ENCODE measurements at regions of chr4 and their contacts with region 1.

Region 1: GRCh38 chr4:7802093-7802726 is 137.5 kb downstream of the AFAP1 start:
- DNase-seq: peak; percentile 68
- H3K4me3 Mint-ChIP-seq: no peak overlapping the region
- H3K27ac Mint-ChIP-seq: no peak overlapping the region
- H3K4me1 Mint-ChIP-seq: peaks cover 7% of the 10 kb centered on the region
- H3K27me3 Mint-ChIP-seq: no peaks in the 10 kb centered on the region

Region 2: GRCh38 chr4:7719354-7720174 is 82.6 kb before region 1 on chr4:
- intact Hi-C with region 1: loop called (anchors 2 kb)
- DNase-seq: peak; percentile 28
- H3K4me3 Mint-ChIP-seq: no peak overlapping the region
- H3K27ac Mint-ChIP-seq: no peak overlapping the region
- H3K4me1 Mint-ChIP-seq: no peaks in the 10 kb centered on the region
- H3K27me3 Mint-ChIP-seq: peaks cover 1% of the 10 kb centered on the region

Region 3: DNA sequence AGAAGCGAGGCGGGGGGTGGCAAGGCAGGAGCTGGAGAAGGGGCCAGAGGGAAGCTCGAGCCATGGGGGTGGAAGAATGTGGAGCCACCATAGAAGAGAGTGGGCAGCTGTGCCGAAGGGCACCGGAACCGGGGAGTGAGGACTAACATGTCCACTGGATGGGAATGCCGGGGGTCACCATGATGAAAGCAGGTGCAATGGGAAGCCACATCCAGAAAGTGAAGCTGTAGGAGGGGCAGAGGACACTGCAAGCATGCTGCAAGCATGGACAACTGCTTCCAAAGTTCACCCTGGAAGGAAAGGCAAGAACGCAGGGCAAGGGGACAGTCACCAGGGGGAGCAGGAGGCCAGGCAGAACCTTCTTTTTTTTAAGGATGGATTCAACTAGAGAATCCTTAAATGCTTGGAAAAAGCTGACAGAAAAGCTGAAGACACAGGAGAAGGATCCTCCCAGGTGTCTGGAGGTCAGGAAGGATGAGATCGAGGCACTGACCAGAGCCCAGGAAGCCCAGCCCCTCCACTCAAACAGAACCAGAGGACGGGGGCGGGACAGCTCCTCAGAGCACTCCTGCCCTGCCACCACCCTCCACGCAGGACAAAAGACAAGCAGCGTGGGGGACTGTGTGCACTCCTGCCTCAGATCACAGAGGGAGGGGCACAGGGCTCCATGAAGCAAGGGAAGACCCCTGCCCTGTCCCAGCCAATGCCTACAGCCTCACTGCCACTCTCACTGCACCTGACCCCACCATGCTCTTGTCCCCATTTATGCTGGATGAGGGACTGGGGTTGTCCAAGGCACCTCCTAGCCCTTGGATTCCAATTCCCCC is 31.8 kb before region 1 on chr4:
- intact Hi-C with region 1: loop called (anchors 1 kb)
- DNase-seq: no peak
- H3K4me3 Mint-ChIP-seq: no peak overlapping the region
- H3K27ac Mint-ChIP-seq: peak overlapping the region; percentile 43
- H3K4me1 Mint-ChIP-seq: peaks cover 13% of the 10 kb centered on the region
- H3K27me3 Mint-ChIP-seq: no peaks in the 10 kb centered on the region

Region 4: DNA sequence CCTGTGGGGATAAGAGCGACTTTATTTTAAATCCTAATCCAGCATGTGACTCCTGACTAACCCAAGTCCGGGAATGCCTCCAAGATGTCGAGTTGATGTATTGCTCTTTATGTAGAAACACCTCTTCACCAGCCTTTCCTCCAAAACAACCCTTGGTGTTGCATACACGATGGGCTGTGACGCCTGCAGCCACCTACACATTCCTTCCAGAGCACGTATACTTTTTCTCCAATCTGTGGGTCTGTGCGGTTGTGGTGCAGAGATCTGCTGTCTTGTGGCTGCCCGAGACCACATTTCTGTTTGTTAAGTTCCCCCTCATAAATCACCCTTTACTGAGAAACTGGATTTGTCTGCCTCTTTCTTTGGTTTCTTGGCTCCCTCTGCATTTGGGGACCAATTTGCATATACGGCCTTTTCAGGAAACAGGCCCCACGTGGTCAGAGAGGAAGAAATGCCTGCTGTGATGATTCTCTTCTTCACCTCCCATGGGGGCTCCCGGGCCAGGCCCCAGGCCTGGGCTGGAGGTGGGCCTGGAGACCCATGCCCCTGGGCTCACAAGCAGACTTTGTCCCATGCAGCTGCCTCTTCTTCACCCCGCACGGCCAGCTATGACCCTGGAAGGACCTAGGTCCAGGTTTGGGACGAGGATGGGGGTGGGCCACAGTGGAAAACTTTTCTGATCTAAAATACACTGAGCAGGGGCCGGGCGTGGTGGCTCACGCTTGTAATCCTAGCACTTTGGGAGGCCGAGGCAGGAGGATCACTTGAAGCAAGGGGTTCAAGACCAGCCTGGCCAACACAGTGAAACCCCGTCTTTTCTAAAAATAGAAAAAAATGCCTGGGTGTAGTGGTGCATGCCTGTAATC is 158.8 kb after region 1 on chr4:
- intact Hi-C with region 1: loop called (anchors 5 kb)
- DNase-seq: peak; percentile 59
- H3K4me3 Mint-ChIP-seq: peak overlapping the region; percentile 20
- H3K27ac Mint-ChIP-seq: peak overlapping the region; percentile 94
- H3K4me1 Mint-ChIP-seq: peaks cover 53% of the 10 kb centered on the region
- H3K27me3 Mint-ChIP-seq: no peaks in the 10 kb centered on the region

Measured in activated T-helper 2 cell treated with anti-CD3 and anti-CD28 coated beads, Interferon-gamma antibody, Interleukin-2, Interleukin-4, amounts not matched to agents 10 μg/mL and 5 μg/mL and 100 μg/mL, durations not matched to agents 14 hours and 24 hours and 36 hours (primary cell).